ENCODE measurements at regions of chr1 and their contacts with region 1.

Region 1: DNA sequence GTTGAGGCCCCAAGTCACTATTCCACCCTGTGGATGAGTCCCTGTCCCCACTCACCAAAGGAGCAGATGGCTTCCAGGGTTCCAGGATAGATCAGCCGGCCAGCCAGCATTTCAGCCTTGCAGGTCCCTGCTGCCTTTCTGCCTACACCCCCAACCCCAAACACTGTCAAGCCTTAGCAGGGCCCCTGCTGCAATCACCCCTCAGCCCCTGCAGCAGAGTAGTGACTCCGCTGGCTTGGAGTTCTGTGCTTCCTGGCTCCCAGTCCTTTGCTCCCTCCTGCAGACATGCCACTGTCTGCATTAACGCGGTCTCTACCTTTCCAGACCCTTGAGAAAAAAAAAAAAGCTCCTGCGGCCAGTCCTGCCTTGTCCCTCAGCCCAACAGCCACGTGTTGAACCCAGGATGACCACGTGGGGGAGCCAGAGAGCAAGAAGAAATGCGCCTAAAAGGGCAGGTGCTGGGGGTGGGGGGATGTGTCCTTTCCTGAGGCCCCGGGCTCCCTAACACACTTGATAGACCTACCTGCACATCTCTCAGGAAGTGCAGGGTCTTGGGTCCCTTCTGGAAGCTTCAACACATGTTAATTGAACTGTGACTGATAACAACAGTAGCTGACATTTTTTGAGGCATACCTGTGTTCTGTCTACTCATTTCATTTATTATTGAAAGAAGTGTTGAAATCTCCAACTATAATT is 37.4 kb downstream of the RASSF5 start:
- DNase-seq: peak; percentile 67 to 87 (median 75)
- H3K4me3 ChIP-seq: no peak overlapping the region
- H3K4me3 Mint-ChIP-seq: no peak overlapping the region
- H3K27ac ChIP-seq: no peak overlapping the region
- H3K27ac Mint-ChIP-seq: peak overlapping the region in 5 of 8 donors; percentile 36 to 70 (median 44)
- H3K4me1 ChIP-seq: peaks cover 8% of the 10 kb centered on the region
- H3K4me1 Mint-ChIP-seq: peaks cover 10 to 16% (median 15%) of the 10 kb centered on the region in 3 donors
- H3K27me3 ChIP-seq: no peaks in the 10 kb centered on the region
- H3K27me3 Mint-ChIP-seq: peaks cover 0 to 3% of the 10 kb centered on the region in 2 donors

Region 2: DNA sequence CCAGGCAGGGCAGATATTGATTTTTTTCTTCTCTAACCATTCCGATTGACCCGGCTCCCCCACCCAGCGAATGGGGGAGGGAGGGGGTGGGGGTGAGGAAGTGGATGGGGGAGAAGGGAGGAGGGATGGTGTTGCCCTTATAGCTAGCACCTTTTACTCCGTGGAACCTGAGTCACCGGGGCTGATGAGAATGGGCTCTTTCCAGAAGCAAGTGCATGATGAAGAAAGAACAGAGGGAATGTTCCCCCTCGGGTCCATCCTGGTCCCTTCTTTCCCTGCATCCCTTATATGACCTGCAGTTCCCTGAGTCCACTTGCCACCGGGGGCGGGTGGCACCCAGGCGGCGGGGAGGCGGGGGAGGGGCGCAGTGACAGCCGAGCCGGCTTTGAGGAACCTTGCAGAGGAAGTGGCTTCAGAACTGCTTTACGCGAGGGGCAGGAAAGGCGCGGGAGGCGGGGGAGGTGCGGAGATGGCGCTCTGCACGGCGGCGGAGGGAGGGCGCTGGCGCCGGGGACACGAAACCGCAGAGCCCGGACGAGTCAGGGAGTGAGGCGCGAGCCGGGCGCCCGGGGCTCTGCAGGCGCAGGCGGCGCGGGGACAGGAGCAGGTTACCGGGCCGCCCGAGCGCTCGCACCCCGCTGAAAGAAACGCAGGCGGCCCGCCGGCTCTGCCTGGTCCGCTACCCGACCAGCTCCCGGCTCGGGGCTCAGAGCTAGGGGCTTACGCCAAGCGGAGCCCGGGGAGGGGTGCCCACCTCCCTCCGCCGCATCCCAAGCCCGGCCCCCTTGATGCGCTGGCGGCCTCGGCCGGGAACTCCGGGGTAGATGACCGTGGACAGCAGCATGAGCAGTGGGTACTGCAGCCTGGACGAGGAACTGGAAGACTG is 12.3 kb after region 1 on chr1:
- CTCF ChIA-PET with region 1: interaction called, 122 read pairs
- POLR2A ChIA-PET with region 1: interaction called, 9 read pairs
- DNase-seq: peak; percentile 84 to 91 (median 91)
- H3K4me3 ChIP-seq: peak overlapping the region; percentile 99
- H3K4me3 Mint-ChIP-seq: peak overlapping the region; percentile 96 to 100 (median 98)
- H3K27ac ChIP-seq: peak overlapping the region; percentile 92
- H3K27ac Mint-ChIP-seq: peak overlapping the region; percentile 87 to 99 (median 97)
- H3K4me1 ChIP-seq: peaks cover 71% of the 10 kb centered on the region
- H3K4me1 Mint-ChIP-seq: peaks cover 72 to 80% (median 76%) of the 10 kb centered on the region in 3 donors
- H3K27me3 ChIP-seq: no peaks in the 10 kb centered on the region
- H3K27me3 Mint-ChIP-seq: peaks cover 0 to 3% of the 10 kb centered on the region in 2 donors

Region 3: DNA sequence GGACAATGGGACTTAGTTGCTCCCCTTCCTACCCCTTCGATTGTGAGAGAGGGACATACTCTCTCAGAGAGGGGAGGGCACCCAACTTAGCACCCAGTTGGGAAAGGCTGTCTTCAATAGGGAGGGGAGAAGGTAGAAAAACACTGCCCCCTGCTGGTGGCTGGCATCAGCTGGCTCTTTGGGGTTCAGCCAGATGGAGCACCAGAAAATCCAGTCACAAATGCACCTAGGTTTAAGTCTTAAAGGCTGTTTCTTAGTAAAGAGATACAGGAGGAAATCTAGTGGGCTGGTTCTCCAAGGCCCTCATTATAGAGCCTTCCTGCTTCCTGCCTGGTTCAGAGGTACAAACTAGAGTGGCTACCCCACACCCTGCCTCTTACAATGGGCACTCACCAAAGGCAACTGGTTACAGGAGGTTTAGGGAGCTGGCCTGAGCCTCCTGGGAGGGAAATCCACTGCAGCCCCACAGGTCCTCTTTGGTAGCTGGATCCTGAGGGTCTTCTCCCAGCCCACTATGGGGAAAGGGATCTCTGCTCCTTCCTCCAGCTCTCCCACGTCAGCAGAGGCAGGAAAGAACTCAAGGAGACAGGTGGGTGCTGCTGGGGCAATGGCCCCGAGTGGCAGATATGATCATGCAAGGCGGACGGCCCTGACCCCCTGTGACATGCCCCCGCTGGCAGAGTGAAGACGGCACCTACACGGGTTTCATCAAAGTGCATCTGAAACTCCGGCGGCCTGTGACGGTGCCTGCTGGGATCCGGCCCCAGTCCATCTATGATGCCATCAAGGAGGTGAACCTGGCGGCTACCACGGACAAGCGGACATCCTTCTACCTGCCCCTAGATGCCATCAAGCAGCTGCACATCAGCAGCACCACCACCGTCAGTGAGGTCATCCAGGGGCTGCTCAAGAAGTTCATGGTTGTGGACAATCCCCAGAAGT is 39.3 kb after region 1 on chr1:
- CTCF ChIA-PET with region 1: interaction called, 503 read pairs
- POLR2A ChIA-PET with region 1: interaction called, 4 read pairs
- DNase-seq: peak; percentile 76 to 86 (median 80)
- H3K4me3 ChIP-seq: peak overlapping the region; percentile 22
- H3K4me3 Mint-ChIP-seq: peak overlapping the region; percentile 59 to 92 (median 88)
- H3K27ac ChIP-seq: peak overlapping the region; percentile 78
- H3K27ac Mint-ChIP-seq: peak overlapping the region; percentile 92 to 100 (median 98)
- H3K4me1 ChIP-seq: peaks cover 51% of the 10 kb centered on the region
- H3K4me1 Mint-ChIP-seq: peaks cover 58 to 84% (median 72%) of the 10 kb centered on the region in 3 donors
- H3K27me3 ChIP-seq: no peaks in the 10 kb centered on the region
- H3K27me3 Mint-ChIP-seq: peaks cover 0 to 1% of the 10 kb centered on the region in 2 donors

Region 4: DNA sequence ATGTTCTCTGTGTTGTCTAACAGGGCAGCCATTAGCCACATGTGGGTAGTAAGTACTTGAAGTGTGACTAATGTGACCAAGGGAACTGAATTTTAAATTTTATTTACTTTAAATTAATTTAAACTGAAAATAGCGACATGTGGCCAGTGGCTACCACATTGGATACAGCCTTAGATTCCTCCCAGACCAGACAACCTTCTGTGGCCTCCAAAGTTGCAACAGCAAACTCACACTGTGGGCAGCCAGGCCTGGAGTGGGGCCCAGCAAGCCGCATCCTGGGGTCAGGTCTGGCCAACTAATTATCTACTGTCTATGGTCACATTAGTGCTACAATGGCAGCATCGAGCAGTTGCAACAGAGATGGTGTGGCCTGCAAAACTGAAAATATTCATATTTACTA is 55.8 kb after region 1 on chr1:
- CTCF ChIA-PET with region 1: interaction called, 11 read pairs
- POLR2A ChIA-PET with region 1: no interaction called
- DNase-seq: no peak
- H3K4me3 ChIP-seq: no peak overlapping the region
- H3K4me3 Mint-ChIP-seq: no peak overlapping the region
- H3K27ac ChIP-seq: no peak overlapping the region
- H3K27ac Mint-ChIP-seq: no peak overlapping the region
- H3K4me1 ChIP-seq: no peaks in the 10 kb centered on the region
- H3K4me1 Mint-ChIP-seq: no peaks in the 10 kb centered on the region
- H3K27me3 ChIP-seq: no peaks in the 10 kb centered on the region
- H3K27me3 Mint-ChIP-seq: no peaks in the 10 kb centered on the region

Region 5: DNA sequence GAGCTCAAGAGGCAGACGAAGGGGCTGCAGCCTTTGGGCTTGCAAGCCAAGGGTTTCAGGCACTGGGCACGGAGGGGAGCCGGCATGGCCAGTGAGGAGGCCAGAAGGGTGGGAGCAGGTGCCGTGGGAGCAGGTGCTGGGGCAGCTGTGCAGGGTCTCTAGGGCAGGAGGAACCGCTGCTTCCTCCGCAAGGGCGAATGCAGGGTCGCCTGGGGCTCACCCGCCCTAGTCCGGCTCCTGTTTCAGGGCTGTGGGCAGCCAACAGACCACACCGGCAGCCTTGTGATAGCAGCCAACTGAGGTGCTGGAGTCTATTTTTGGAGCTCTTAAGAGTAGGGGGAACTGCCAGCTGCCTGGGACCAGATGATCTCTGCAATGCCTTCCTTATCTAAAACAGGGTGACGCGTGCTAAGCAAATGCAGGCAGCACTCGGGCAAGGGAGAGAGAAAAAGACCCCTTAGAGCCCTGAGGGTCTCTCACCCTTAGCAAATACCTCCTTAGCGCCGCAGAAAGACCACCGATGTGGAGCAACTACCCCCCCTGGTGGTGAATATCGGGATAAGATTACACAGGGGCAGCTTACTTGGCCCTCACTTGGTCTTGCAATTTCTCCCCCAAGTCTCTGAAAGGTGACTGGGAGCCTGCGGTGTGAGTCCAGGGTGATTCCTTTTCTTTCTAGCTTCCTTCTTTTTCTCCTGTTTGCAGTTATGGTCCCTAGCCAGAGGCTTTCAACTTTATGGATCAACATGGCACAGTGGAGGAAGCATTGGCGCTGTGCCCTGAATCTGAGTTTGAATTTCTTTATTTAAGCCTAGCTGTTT is 119.3 kb after region 1 on chr1:
- CTCF ChIA-PET with region 1: interaction called, 40 read pairs
- POLR2A ChIA-PET with region 1: no interaction called
- DNase-seq: peak; percentile 50 to 77 (median 63)
- H3K4me3 ChIP-seq: no peak overlapping the region
- H3K4me3 Mint-ChIP-seq: peak overlapping the region in 1 of 7 donors; percentile 18
- H3K27ac ChIP-seq: no peak overlapping the region
- H3K27ac Mint-ChIP-seq: no peak overlapping the region
- H3K4me1 ChIP-seq: peaks cover 14% of the 10 kb centered on the region
- H3K4me1 Mint-ChIP-seq: peaks cover 14 to 20% (median 15%) of the 10 kb centered on the region in 3 donors
- H3K27me3 ChIP-seq: peaks cover 5% of the 10 kb centered on the region
- H3K27me3 Mint-ChIP-seq: peaks cover 15 to 30% of the 10 kb centered on the region in 2 donors